ENCODE measurements at regions of chr1 and their contacts with region 1.

Region 1: DNA sequence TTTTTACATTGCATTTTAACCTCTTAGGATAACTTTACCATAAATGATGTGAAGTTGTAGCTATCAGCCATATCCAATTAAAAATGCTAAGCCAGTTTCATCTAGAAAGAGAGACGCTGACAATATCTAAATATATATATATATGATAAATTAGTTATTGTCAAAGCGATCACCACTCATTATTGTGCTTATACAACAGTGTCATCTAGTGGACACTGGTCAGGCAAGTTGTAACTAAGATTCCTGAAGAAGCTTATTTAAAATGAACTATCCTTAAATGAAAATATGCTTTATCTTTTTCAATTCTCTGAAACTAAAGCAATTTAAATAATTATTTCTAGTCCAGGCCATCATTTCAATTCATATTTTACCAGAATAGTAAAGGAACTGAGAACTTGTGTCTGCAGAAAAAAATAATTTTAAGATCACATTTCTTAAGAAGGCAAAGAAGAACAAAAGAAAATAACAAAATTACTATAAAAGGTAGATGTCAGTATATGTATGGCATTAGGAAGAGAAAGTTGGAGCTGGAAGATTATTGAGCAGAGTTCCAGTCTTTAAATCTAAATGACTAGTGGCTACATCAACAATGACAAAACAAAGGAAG is 193.3 kb upstream of the SNX7 start:
- DNase-seq: peak; percentile 67
- H3K4me3 Mint-ChIP-seq: no peak overlapping the region
- H3K27ac Mint-ChIP-seq: no peak overlapping the region
- H3K4me1 Mint-ChIP-seq: peaks cover 29% of the 10 kb centered on the region
- H3K27me3 Mint-ChIP-seq: no peaks in the 10 kb centered on the region
- CTCF ChIP-seq: peak; percentile 89

Region 2: GRCh38 chr1:96966536-96967138 is 1501.6 kb before region 1 on chr1:
- CTCF ChIA-PET with region 1: interaction called, 5 read pairs
- POLR2A ChIA-PET with region 1: no interaction called
- intact Hi-C with region 1: loop called (anchors 1 kb)
- DNase-seq: peak; percentile 70
- H3K4me3 Mint-ChIP-seq: peak overlapping the region; percentile 4
- H3K27ac Mint-ChIP-seq: no peak overlapping the region
- H3K4me1 Mint-ChIP-seq: peaks cover 6% of the 10 kb centered on the region
- H3K27me3 Mint-ChIP-seq: no peaks in the 10 kb centered on the region
- CTCF ChIP-seq: peak; percentile 90

Region 3: DNA sequence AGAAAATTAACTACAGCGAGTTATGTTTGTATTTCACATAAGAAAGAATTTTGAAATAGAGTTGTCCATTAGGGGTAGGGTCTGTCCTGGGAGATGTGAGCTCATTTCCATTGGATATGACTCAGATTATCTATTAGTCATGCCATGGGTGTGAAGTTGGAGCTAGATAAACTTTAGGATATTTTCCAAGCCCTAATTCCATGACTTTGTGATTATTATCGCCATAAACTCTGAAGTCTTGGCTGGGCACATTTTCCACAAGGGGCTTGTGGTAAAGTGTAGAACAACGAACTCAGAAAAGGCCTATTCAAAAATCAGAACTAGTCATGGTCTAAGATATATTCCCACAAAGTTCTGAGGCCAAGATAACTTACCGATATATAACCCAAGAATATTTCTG is 944.0 kb before region 1 on chr1:
- CTCF ChIA-PET with region 1: no interaction called
- POLR2A ChIA-PET with region 1: no interaction called
- intact Hi-C with region 1: no loop called
- DNase-seq: no peak
- H3K4me3 Mint-ChIP-seq: no peak overlapping the region
- H3K27ac Mint-ChIP-seq: no peak overlapping the region
- H3K4me1 Mint-ChIP-seq: no peaks in the 10 kb centered on the region
- H3K27me3 Mint-ChIP-seq: no peaks in the 10 kb centered on the region
- CTCF ChIP-seq: no peak

Region 4: GRCh38 chr1:97668945-97669344 is 799.3 kb before region 1 on chr1:
- CTCF ChIA-PET with region 1: no interaction called
- POLR2A ChIA-PET with region 1: no interaction called
- intact Hi-C with region 1: loop called (anchors 1 kb)
- DNase-seq: peak; percentile 47
- H3K4me3 Mint-ChIP-seq: no peak overlapping the region
- H3K27ac Mint-ChIP-seq: no peak overlapping the region
- H3K4me1 Mint-ChIP-seq: no peaks in the 10 kb centered on the region
- H3K27me3 Mint-ChIP-seq: no peaks in the 10 kb centered on the region
- CTCF ChIP-seq: peak; percentile 34

Region 5: GRCh38 chr1:98001764-98002163 is 466.4 kb before region 1 on chr1:
- CTCF ChIA-PET with region 1: no interaction called
- POLR2A ChIA-PET with region 1: no interaction called
- intact Hi-C with region 1: loop called (anchors 2 kb)
- DNase-seq: peak; percentile 3
- H3K4me3 Mint-ChIP-seq: no peak overlapping the region
- H3K27ac Mint-ChIP-seq: no peak overlapping the region
- H3K4me1 Mint-ChIP-seq: peaks cover 12% of the 10 kb centered on the region
- H3K27me3 Mint-ChIP-seq: no peaks in the 10 kb centered on the region
- CTCF ChIP-seq: no peak

Region 6: DNA sequence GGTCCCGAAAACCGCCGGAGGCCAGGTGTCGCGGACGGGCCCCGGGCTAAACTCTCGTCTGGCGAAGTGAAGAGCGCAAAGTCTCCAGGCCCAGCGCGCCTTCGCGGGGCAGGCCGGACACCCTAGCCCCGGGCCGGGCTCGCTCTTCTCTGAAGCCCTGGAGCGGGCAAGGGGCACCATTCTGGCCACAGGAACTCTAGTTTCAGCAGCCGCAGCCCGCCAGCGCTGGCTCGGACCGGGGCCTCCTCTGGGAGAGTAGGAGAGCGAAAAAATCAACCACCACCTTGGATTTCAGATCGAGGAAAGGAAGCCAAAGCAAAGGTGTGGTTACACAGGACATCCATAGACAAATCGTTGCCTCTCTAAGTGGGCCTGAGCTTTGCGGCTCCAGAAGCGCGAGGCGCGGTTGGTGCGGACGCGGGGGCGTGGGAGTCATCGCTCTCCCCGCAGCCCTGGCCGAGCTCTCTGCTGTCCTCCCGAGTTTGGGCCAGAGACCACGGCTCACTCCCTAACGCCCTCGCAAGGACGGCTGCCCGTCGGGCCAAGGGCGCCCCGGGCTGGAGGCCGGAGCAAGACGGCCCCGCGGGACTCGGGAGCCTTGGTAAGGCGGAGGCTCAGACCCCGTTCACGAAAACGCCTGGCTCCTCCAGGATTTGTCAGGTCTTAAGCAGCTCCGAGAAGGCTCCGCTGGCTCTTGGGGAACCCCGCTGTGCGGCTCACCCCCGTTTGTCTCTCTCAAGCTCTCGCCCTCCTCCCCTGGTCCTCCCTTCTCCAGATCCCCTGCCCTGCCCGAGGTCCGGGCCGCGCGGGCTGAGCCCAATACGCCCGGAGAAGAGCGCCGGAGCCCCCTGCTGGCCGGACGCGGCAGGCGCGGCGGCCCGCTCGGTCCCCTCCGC is 414.5 kb before region 1 on chr1:
- CTCF ChIA-PET with region 1: interaction called, 6 read pairs
- POLR2A ChIA-PET with region 1: no interaction called
- intact Hi-C with region 1: loop called (anchors 2 kb)
- DNase-seq: no peak
- H3K4me3 Mint-ChIP-seq: peak overlapping the region; percentile 25
- H3K27ac Mint-ChIP-seq: peak overlapping the region; percentile 61
- H3K4me1 Mint-ChIP-seq: peaks cover 6% of the 10 kb centered on the region
- H3K27me3 Mint-ChIP-seq: no peaks in the 10 kb centered on the region
- CTCF ChIP-seq: peak; percentile 52

Region 7: DNA sequence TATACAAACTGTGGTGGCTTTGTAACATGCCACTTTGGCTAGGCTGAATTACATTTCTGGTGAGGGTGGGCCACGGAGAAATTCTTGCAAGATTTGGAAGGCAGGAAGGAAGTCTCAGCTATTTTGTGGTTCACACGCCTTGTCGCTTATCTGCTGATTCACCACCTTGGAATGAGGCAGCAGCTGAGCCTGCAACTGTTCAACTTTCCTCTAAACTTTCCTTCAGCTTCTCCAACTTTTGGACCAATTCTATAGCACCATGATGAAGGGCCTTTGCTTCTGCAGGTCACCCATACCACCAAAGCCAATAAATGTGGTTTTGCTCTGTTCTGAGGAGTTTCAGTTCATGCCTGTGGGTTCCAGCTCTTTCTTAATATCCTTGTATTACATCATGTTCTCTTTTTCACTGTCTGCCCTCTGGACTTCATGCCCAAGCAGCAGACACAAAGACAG is 144.3 kb before region 1 on chr1:
- CTCF ChIA-PET with region 1: interaction called, 9 read pairs
- POLR2A ChIA-PET with region 1: interaction called, 3 read pairs
- intact Hi-C with region 1: loop called (anchors 5 kb)
- DNase-seq: peak; percentile 90
- H3K4me3 Mint-ChIP-seq: peak overlapping the region; percentile 48
- H3K27ac Mint-ChIP-seq: peak overlapping the region; percentile 83
- H3K4me1 Mint-ChIP-seq: peaks cover 42% of the 10 kb centered on the region
- H3K27me3 Mint-ChIP-seq: no peaks in the 10 kb centered on the region
- CTCF ChIP-seq: no peak

Measured in MCF 10A (cell line).